Ovary (tissue), 10 donors: ENCODE measurements at regions of chr7 and their contacts with region 1.

Region 1: DNA sequence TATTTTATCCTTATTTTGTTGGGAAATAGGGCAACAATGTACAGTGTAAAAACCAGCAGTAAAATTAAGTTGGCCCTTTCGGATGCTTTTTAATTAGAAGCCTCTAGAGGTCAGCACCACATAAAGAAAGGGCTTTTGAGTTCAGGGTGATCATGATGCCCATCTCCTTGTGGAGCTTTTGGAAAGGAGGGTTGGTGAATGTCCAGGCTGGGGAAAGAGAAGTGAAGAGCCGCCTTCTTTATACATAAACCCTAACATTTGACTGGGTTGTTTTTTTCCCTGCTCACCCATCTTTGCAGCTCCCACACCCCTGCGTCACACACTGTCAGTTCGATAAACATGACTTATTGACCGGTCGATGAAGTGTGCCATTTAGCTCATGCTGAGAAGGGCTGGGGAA is 29.8 kb downstream of the MTURN start:
- DNase-seq: no peak
- H3K4me3 ChIP-seq: no peak overlapping the region
- H3K27ac ChIP-seq: no peak overlapping the region
- H3K4me1 ChIP-seq: peaks cover 6% of the 10 kb centered on the region
- H3K27me3 ChIP-seq: no peaks in the 10 kb centered on the region
- CTCF ChIP-seq: no peak
- EP300 ChIP-seq: no peak
- POLR2A ChIP-seq: no peak

Region 2: DNA sequence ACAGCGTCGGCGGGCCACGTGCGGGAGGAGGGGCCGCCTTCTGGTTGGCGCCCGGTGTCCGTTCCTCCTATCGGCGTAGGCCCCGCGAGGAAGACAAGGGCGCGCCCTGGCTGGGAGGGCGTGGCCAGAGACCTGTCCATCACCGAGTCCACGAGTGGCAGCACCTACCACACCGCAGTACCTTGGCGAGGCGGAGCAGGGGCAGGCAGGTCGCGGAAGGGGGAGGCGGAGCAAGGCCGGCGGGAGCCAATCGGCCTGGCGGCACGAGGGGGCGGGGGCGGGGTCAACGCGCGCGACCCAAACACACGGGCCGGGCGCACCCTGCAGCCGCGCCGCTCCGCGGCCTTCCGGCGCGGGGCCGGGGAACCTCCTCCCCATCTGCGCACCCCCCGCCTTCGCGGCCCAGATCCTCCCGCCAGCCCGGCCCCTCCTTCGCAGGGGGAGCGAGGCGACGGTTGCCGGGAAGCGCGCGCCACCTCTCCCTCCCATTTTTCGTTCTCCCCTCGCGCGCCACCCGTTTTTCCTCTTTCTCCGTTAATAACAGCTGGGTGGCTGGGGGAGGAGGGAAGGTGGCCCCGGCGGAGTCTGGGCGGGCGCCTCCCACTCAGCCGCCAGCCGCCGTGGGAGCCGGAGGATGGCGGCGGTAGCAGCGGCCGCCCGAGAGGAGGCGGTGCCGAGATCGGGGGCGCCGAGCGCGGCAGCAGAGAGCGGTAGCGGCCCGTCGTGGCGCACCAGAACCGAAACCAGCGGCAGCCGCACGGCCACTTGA is 119.9 kb after region 1 on chr7 and contains the start of gene ZNRF2:
- intact Hi-C with region 1: loop called in 1 of 4 experiments (anchors 10 kb)
- DNase-seq: peak; percentile 98 to 99 (median 98)
- H3K4me3 ChIP-seq: peak within 1 kb of the TSS; percentile 57
- H3K27ac ChIP-seq: peak within 1 kb of the TSS; percentile 99 to 100
- H3K4me1 ChIP-seq: no peaks in the 10 kb centered on the region
- H3K27me3 ChIP-seq: no peaks in the 10 kb centered on the region
- CTCF ChIP-seq: peak; percentile 53 to 76 (median 67)
- EP300 ChIP-seq: peak; percentile 59
- POLR2A ChIP-seq: peak; percentile 70
- total RNA-seq, gene ZNRF2: 9.8 to 24.8 (median 12.1) TPM